Heart right ventricle (tissue), 16 donors: ENCODE measurements at regions of chr12 and their contacts with region 1.

Region 1: DNA sequence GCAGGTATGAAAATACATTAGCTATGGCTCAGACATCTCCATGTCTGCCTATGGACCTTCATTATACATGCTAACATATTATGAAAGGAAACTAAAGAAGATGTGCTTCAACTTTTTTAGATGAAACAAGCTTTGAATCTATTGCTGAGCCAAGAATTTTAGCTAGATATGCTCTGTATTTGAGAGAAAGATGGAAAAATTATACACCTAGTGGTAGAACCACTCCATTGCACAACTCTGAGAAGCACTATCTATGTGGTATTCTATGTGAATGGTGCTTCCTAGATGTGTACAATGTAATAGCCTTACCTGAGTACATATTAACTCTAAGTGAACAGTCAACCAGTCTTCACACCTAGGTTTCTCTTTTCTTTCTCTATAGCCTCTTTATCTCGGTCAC is 17.3 kb downstream of the EPYC start:
- DNase-seq: no peak
- ATAC-seq: no peak
- H3K4me3 ChIP-seq: no peak overlapping the region
- H3K27ac ChIP-seq: peak overlapping the region in 1 of 10 donors; percentile 54
- H3K4me1 ChIP-seq: peaks cover 0 to 4% (median 0%) of the 10 kb centered on the region in 9 donors
- H3K27me3 ChIP-seq: no peaks in the 10 kb centered on the region
- CTCF ChIP-seq: peak in 1 of 9 donors; percentile 3

Region 2: GRCh38 chr12:91098941-91099340 is 111.4 kb after region 1 on chr12:
- intact Hi-C with region 1: loop called in 1 of 10 experiments (anchors 10 kb)
- DNase-seq: no peak
- ATAC-seq: peak in 2 of 8 donors; percentile 39 to 77
- H3K4me3 ChIP-seq: no peak overlapping the region
- H3K27ac ChIP-seq: peak overlapping the region in 2 of 10 donors; percentile 8 to 14
- H3K4me1 ChIP-seq: no peaks in the 10 kb centered on the region
- H3K27me3 ChIP-seq: no peaks in the 10 kb centered on the region
- CTCF ChIP-seq: no peak

Region 3: GRCh38 chr12:91142221-91142631 is 154.7 kb after region 1 on chr12:
- intact Hi-C with region 1: no loop called
- DNase-seq: peak in 1 of 2 donors; percentile 11
- ATAC-seq: peak in 7 of 8 donors; percentile 66 to 87 (median 77)
- H3K4me3 ChIP-seq: no peak overlapping the region
- H3K27ac ChIP-seq: peak overlapping the region in 8 of 10 donors; percentile 7 to 77 (median 70)
- H3K4me1 ChIP-seq: peaks cover 0 to 35% (median 11%) of the 10 kb centered on the region in 9 donors
- H3K27me3 ChIP-seq: no peaks in the 10 kb centered on the region
- CTCF ChIP-seq: no peak

Region 4: DNA sequence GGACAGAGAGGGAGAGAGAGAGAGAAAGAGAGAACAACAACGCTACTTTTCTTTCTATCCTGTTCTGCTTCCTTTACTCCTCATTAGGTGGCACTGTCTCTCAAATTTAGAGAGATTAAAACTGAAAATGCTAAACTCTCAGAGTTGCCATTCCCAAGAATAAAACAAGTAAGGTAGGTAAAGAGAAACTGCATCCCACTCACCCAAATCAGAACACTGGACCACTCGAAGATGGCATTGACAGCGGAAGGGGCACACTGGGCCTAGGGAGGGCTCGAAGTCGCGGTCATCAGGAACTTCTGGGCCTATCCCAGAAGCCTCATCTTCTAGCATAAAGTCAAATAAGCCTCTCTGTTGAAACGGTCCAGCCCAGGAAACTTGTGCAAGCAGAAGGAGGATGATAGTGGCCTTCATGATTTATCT is 190.6 kb after region 1 on chr12:
- intact Hi-C with region 1: loop called in 1 of 10 experiments (anchors 10 kb)
- DNase-seq: no peak
- ATAC-seq: peak in 7 of 8 donors; percentile 40 to 71 (median 66)
- H3K4me3 ChIP-seq: peak overlapping the region in 9 of 10 donors; percentile 29 to 52 (median 45)
- H3K27ac ChIP-seq: peak overlapping the region; percentile 30 to 84 (median 76)
- H3K4me1 ChIP-seq: peaks cover 0 to 7% (median 0%) of the 10 kb centered on the region in 9 donors
- H3K27me3 ChIP-seq: no peaks in the 10 kb centered on the region
- CTCF ChIP-seq: peak in 8 of 9 donors; percentile 14 to 65 (median 46)

Region 5: DNA sequence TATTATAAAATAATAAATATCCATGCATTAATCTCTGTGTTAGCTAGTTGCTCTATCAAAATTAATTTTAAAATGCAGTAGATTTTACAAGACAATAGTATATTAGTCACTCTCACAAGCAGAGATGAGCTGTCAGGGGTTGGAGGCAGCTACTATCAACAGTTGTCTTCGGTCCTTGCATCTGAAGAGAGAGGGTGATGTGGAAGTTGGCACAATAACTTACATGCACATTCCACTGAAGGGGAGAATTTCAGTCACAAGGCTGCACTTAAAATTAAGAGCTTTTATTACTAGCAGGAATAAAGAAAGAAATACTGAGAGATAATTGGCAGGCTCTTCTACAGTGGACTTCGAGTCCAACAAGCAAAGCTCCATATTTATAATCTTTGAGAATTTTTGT is 362.0 kb after region 1 on chr12:
- intact Hi-C with region 1: loop called in 1 of 10 experiments (anchors 10 kb)
- DNase-seq: no peak
- ATAC-seq: no peak
- H3K4me3 ChIP-seq: no peak overlapping the region
- H3K27ac ChIP-seq: no peak overlapping the region
- H3K4me1 ChIP-seq: no peaks in the 10 kb centered on the region
- H3K27me3 ChIP-seq: no peaks in the 10 kb centered on the region
- CTCF ChIP-seq: no peak

Region 6: GRCh38 chr12:92059976-92060375 is 1072.5 kb after region 1 on chr12:
- intact Hi-C with region 1: loop called in 1 of 10 experiments (anchors 10 kb)
- DNase-seq: no peak
- ATAC-seq: peak in 5 of 8 donors; percentile 56 to 79 (median 74)
- H3K4me3 ChIP-seq: no peak overlapping the region
- H3K27ac ChIP-seq: peak overlapping the region in 2 of 10 donors; percentile 4 to 66
- H3K4me1 ChIP-seq: peaks cover 0 to 41% (median 9%) of the 10 kb centered on the region in 9 donors
- H3K27me3 ChIP-seq: no peaks in the 10 kb centered on the region
- CTCF ChIP-seq: no peak